ENCODE measurements at regions of chr21 and their contacts with region 1.

Region 1: DNA sequence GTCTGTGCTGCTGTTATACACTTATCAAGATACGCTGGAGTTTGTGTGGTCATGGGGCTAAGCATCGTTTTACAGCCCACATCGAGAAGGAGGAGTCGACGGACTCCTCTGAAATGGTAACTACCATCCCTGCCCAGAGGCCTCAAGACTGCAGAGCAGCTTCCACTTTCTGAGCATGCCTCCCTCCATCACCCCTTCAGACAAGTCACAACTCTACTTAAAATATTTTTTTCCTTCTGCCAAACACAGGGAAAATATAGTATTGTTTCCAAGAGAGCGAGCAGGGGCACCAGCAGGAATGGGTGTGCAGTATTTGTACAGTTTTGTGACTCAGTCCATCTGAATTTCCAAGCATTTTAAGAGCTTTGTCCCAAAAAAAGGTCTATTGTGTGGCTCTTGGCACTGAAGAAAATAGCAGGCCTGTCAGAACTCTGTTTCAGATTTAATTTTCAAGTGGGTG is 14.1 kb downstream of the EVA1C start:
- DNase-seq: peak; percentile 86
- ATAC-seq: peak; percentile 81
- H3K4me3 ChIP-seq: peak overlapping the region; percentile 43
- H3K27ac ChIP-seq: peak overlapping the region; percentile 87
- H3K4me1 ChIP-seq: peaks cover 59% of the 10 kb centered on the region
- H3K27me3 ChIP-seq: no peaks in the 10 kb centered on the region
- CTCF ChIP-seq: no peak

Region 2: GRCh38 chr21:32463889-32464300 is 37.3 kb after region 1 on chr21:
- CTCF ChIA-PET with region 1: no interaction called
- POLR2A ChIA-PET with region 1: no interaction called
- intact Hi-C with region 1: loop called (anchors 5 kb)
- DNase-seq: peak; percentile 80
- ATAC-seq: peak; percentile 74
- H3K4me3 ChIP-seq: no peak overlapping the region
- H3K27ac ChIP-seq: peak overlapping the region; percentile 93
- H3K4me1 ChIP-seq: peaks cover 25% of the 10 kb centered on the region
- H3K27me3 ChIP-seq: no peaks in the 10 kb centered on the region
- CTCF ChIP-seq: no peak

Region 3: GRCh38 chr21:33244082-33244778 is 817.6 kb after region 1 on chr21:
- CTCF ChIA-PET with region 1: no interaction called
- POLR2A ChIA-PET with region 1: no interaction called
- intact Hi-C with region 1: no loop called
- DNase-seq: no peak
- ATAC-seq: no peak
- H3K4me3 ChIP-seq: no peak overlapping the region
- H3K27ac ChIP-seq: no peak overlapping the region
- H3K4me1 ChIP-seq: no peaks in the 10 kb centered on the region
- H3K27me3 ChIP-seq: no peaks in the 10 kb centered on the region
- CTCF ChIP-seq: no peak

Measured in PC-3 (cell line).